PC-3 (cell line): ENCODE measurements at regions of chr7 and their contacts with region 1.

Region 1: GRCh38 chr7:518630-519483 is 789 bp downstream of the PDGFA start:
- DNase-seq: peak; percentile 69
- ATAC-seq: peak; percentile 59
- H3K4me3 ChIP-seq: peak overlapping the region; percentile 95
- H3K27ac ChIP-seq: no peak overlapping the region
- H3K4me1 ChIP-seq: peaks cover 11% of the 10 kb centered on the region; the same call in 1 of the 2 replicates
- H3K27me3 ChIP-seq: peaks cover 18% of the 10 kb centered on the region
- CTCF ChIP-seq: no peak

Region 2: DNA sequence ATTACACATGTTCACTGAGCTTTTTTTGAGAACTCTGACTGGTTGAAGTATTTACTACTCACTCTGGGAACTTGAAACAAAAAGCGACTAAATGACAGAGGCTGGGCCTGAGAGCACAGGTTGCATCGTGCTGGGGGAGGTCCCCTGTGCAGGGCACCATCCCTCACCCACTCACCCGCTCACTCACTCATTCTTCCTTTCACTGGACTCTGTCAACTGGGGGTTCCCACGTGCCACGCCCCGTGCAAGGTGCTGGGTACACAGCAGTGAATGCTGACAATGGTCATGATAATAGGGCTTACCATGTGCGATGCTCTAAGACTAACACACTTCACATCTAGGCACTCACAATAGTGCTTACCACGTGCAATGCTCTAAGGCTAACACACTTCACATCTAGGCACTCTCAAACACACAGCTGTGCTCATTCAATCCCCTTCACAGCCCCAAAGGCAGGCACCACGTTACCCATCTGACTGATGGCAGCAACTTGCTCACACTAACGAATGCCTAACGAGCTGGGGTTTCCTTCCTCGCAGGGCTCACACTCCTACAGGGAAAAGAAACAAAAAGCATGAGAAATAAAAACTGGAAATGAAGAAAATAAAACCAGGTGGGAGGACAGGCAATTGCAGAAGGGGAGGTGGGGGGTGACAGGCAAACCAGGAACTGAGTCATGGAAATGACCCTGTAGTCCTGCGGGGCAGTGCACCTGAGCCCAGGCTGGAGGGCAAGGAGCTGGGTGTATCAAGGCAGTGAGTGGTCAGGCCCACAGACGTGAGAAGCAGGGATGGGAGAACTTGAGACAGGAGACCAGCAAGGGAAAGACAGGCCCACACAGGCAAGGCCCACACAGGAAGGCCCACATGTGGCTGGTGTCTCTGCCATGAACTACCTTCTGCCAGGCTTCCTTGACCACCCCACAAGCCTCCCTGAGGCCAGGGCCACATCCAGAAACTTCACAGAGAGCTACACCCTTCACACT is 473.5 kb before region 1 on chr7:
- CTCF ChIA-PET with region 1: no interaction called
- POLR2A ChIA-PET with region 1: no interaction called
- intact Hi-C with region 1: no loop called
- DNase-seq: no peak
- ATAC-seq: no peak
- H3K4me3 ChIP-seq: no peak overlapping the region
- H3K27ac ChIP-seq: no peak overlapping the region
- H3K4me1 ChIP-seq: 0 out of 2 replicates have a peak, but pooled peaks cover 3% of the 10 kb centered on the region
- H3K27me3 ChIP-seq: no peaks in the 10 kb centered on the region
- CTCF ChIP-seq: no peak

Region 3: DNA sequence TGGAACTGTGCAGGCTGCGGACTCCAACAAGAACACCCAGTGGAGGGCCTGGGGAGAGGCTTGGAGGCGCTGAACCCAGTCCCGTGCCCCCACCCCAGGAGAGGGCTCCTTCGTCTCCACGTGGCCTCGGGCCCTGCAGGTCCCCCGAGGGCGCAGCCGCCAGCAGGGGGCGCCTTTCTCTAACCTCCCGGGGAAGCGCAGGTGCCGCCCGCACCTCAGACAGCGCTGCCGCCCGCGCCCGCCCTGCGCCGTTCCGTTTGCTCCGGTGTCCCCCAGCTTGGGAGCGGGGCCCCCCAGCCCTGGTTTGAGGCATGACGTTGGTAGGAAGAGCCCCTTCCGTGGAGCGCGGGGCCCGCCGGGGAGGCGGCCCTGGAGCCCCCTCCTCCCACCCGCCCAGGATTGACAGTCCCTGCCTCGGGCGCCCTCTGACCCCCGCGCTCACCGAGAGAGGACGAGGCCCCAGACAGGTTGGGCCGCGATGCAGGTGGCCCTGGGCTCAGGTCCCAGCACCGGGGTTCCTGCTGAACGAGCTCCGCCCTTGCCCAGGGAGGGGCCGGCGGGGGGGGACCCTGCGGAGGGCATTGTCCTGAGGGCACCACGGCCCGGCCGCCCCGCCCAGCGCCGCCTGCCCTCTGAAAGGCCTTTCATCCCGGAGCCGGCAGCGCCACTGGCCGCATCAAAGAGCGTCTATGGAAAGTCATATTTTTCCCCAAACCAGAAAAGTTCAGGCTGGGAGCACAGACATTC is 186.0 kb before region 1 on chr7:
- CTCF ChIA-PET with region 1: no interaction called
- POLR2A ChIA-PET with region 1: no interaction called
- intact Hi-C with region 1: loop called (anchors 1 kb)
- DNase-seq: peak; percentile 80
- ATAC-seq: peak; percentile 93
- H3K4me3 ChIP-seq: peak overlapping the region; percentile 69
- H3K27ac ChIP-seq: no peak overlapping the region
- H3K4me1 ChIP-seq: peaks cover 7% of the 10 kb centered on the region
- H3K27me3 ChIP-seq: no peaks in the 10 kb centered on the region
- CTCF ChIP-seq: peak; percentile 78

Region 4: DNA sequence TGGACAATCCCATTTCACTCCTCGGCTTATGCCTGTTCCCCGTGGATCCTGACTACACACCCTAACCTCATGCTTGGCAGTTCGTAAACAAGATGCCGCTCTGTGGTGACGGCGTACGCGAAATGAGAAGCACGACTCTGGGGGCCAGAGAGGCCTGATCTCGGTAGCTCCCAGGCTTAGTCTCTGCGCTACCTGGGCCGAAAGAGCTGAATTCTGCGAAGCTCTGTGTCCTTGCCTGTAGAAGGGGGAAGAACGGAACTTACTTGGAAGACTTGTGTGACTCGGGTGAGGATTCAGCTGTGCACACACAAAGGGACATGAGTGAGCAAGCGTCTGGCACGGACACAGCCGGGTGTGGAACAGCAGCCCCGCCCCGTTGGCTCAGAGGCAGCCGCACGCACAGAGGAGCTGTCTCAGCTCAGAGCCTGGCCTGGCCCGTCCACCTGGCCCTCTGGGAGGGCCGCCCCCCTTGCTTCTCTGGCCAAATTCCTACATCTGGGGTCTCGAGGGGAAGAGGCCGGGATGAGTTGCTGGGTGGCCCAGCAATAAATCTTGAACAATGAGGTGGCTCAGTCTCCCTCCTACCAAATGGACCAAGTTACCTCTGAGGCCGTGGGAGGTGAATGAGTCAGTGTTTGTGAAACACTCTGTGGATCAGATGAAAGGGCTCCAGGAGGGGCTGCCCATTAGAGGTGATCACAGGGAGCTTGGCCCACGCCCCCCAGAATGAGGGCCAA is 83.1 kb before region 1 on chr7:
- CTCF ChIA-PET with region 1: no interaction called
- POLR2A ChIA-PET with region 1: no interaction called
- intact Hi-C with region 1: loop called (anchors 2 kb)
- DNase-seq: peak; percentile 82
- ATAC-seq: peak; percentile 89
- H3K4me3 ChIP-seq: peak overlapping the region; percentile 61
- H3K27ac ChIP-seq: peak overlapping the region; percentile 71
- H3K4me1 ChIP-seq: peaks cover 19% of the 10 kb centered on the region
- H3K27me3 ChIP-seq: no peaks in the 10 kb centered on the region
- CTCF ChIP-seq: no peak

Region 5: GRCh38 chr7:620052-620451 is 101.2 kb after region 1 on chr7:
- CTCF ChIA-PET with region 1: no interaction called
- POLR2A ChIA-PET with region 1: no interaction called
- intact Hi-C with region 1: loop called (anchors 5 kb)
- DNase-seq: peak; percentile 39
- ATAC-seq: peak; percentile 82
- H3K4me3 ChIP-seq: no peak overlapping the region
- H3K27ac ChIP-seq: no peak overlapping the region
- H3K4me1 ChIP-seq: peaks cover 10% of the 10 kb centered on the region
- H3K27me3 ChIP-seq: no peaks in the 10 kb centered on the region
- CTCF ChIP-seq: no peak

Region 6: DNA sequence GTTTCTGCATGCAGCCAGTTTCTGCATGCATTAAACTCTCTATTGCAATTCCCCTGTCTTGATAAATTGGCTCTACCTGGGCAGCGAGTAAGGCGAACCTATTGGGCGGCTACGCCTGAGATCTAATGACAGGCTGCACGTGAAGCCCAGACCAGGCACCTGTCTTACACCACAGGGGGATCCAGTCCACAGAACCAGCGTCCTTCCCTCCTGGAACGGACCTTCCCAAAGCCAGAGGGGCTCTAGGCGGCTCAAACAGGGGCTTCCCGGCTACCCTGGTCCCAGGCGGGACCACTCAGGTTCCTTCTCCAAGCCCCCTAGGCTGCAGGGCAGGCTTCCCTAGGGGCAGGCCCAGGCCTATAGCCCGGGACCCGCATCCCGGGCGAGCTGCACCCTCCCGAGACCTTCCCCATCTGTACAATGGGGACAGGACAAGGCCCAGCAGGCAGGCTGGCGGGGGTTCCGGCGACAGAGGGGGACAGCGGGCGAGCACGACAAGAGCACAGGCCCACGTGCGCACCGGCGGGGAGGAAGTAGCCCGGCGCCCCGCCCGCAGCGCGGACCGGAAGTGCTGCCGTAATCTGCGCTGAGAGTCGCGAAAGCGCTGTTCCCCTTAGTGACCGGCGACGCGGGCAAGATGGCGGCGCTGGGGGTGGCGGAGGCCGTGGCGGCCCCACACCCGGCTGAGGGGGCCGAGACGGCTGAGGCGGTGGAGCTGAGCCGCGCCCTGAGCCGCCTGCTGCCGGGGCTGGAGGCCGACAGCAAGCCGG is 207.4 kb after region 1 on chr7 and contains the start of gene DNAAF5:
- CTCF ChIA-PET with region 1: no interaction called
- POLR2A ChIA-PET with region 1: no interaction called
- intact Hi-C with region 1: loop called (anchors 5 kb)
- DNase-seq: peak; percentile 85
- ATAC-seq: peak; percentile 84
- H3K4me3 ChIP-seq: peak within 1 kb of the TSS; percentile 77
- H3K27ac ChIP-seq: peak within 1 kb of the TSS; percentile 66
- H3K4me1 ChIP-seq: peaks cover 21% of the 10 kb centered on the region
- H3K27me3 ChIP-seq: no peaks in the 10 kb centered on the region
- CTCF ChIP-seq: no peak
- total RNA-seq, gene DNAAF5: 66.3 and 73.7 TPM in 2 replicates